Activated CD4-positive, alpha-beta memory T cell treated with anti-CD3 and anti-CD28 coated beads, Interleukin-2, amount 10 ng/mL, durations not matched to agents 7 days and 5 days (primary cell): ENCODE measurements at regions of chr22 and their contacts with region 1.

Region 1: GRCh38 chr22:22884010-22884887 is 3.4 kb upstream of the IGLL5 start:
- DNase-seq: peak; percentile 78
- H3K4me3 Mint-ChIP-seq: no peak overlapping the region
- H3K27ac Mint-ChIP-seq: no peak overlapping the region
- H3K4me1 Mint-ChIP-seq: peaks cover 22% of the 10 kb centered on the region
- H3K27me3 Mint-ChIP-seq: peaks cover 38% of the 10 kb centered on the region

Region 2: DNA sequence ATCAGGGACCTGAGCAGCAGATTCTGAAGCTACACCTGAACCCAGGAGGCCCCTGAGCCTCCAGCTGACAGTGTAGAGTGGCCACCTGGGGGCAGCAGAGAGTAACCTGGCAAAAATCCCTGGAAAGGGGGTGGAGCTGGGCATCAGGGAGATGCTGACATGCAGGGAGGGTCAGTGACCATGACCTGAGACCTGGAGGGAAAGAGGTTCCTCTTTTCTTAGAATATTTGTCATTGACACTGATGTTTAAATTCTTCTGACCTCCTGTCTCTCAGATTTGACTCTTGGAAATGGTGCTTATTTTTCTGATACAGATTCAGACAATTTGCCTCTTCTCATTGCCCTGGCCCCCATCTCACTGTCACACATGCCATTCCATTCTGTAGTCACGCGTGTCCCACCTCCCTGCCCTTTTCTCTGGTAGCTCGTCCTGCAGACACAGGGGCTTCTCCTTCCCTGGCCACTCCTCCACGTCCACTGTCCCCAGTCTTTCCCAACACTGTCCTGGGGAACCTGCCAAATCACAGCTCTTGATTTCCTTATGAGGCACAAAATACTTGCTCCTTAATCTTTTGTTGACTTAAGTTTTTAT is 113.9 kb before region 1 on chr22:
- CTCF ChIA-PET with region 1: interaction called, 33 read pairs
- POLR2A ChIA-PET with region 1: no interaction called
- DNase-seq: peak; percentile 50
- H3K4me3 Mint-ChIP-seq: no peak overlapping the region
- H3K27ac Mint-ChIP-seq: no peak overlapping the region
- H3K4me1 Mint-ChIP-seq: no peaks in the 10 kb centered on the region
- H3K27me3 Mint-ChIP-seq: peaks cover 9% of the 10 kb centered on the region

Region 3: GRCh38 chr22:22802339-22802970 is 81.8 kb before region 1 on chr22:
- CTCF ChIA-PET with region 1: interaction called, 235 read pairs
- POLR2A ChIA-PET with region 1: interaction called, 5 read pairs
- DNase-seq: peak; percentile 55
- H3K4me3 Mint-ChIP-seq: no peak overlapping the region
- H3K27ac Mint-ChIP-seq: no peak overlapping the region
- H3K4me1 Mint-ChIP-seq: peaks cover 4% of the 10 kb centered on the region
- H3K27me3 Mint-ChIP-seq: peaks cover 13% of the 10 kb centered on the region

Region 4: GRCh38 chr22:22848364-22848866 is 35.8 kb before region 1 on chr22:
- CTCF ChIA-PET with region 1: interaction called, 45 read pairs
- POLR2A ChIA-PET with region 1: no interaction called
- DNase-seq: peak; percentile 74
- H3K4me3 Mint-ChIP-seq: no peak overlapping the region
- H3K27ac Mint-ChIP-seq: no peak overlapping the region
- H3K4me1 Mint-ChIP-seq: peaks cover 7% of the 10 kb centered on the region
- H3K27me3 Mint-ChIP-seq: peaks cover 28% of the 10 kb centered on the region

Region 5: DNA sequence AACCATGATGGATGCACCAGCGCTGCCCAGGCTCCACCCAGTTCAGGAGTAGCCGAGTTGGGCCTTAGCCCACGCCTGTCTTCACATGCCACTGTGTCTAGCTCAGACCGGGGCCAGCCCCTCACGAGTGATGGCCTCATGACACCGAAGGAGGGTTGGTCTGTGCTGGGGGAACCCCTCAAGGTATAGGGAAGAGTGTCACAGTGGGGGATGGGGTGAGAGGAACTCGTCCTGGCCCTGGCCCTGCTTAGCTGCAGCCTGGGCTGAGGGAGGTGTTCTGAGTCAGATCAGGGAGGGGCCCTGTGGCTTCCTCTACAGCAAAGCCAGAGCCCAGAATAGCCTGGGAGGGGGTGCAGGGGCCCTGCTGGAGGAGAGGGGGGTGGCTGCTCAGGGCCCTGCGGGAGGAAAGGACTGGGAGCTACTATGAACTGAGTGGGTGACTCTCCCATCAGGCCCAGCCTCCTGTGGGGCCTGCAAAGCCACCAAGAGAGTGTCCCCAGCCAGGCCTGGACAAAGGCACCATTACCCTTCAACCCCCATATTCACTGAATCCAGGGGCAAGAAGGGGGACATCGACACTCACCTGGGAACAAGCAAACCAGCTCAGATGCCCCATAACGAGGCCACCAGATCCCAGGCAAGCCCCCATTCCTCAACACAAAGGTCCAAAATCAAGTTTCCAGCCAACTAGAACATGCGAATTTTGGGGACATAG is 44.6 kb after region 1 on chr22:
- CTCF ChIA-PET with region 1: interaction called, 19 read pairs
- POLR2A ChIA-PET with region 1: interaction called, 3 read pairs
- DNase-seq: peak; percentile 84
- H3K4me3 Mint-ChIP-seq: no peak overlapping the region
- H3K27ac Mint-ChIP-seq: peak overlapping the region; percentile 78
- H3K4me1 Mint-ChIP-seq: peaks cover 59% of the 10 kb centered on the region
- H3K27me3 Mint-ChIP-seq: peaks cover 4% of the 10 kb centered on the region